ENCODE measurements at regions of chr19 and their contacts with region 1.

Region 1: GRCh38 chr19:18328340-18329034 is 5.6 kb upstream of the LSM4 start:
- DNase-seq: peak; percentile 87 to 94
- H3K4me3 ChIP-seq: peak overlapping the region; percentile 51
- H3K27ac ChIP-seq: peak overlapping the region; percentile 39
- H3K4me1 ChIP-seq: peaks cover 36% of the 10 kb centered on the region
- H3K27me3 ChIP-seq: no peaks in the 10 kb centered on the region
- CTCF ChIP-seq: peak; percentile 96

Region 2: DNA sequence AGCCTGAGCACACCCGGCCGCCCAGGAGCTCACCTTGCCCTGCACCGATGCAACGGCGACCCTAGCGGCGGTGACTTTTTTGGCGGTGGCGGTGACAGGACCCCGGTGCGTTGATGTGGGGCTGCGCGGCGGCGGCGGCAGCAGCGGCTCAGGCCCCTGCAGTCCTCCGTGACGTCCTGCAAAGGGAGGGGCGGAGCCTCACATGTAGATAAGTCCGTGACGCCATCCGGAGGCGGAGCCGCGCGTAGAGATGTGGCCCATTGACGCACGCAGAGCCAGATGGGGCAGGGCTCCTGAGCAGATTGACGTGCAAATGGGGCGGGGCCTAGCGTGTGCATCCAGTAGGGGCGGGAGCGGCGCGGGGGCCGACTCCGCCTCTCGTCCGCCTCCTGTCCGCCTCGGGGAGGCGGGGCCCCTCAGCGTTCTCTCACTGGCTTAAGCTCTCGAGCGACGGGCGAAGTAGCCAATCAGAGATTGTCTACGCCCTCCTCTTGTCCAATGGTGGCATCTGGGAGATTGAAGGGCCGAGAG is 124.6 kb before region 1 on chr19 and contains the start of gene RAB3A:
- CTCF ChIA-PET with region 1: interaction called, 5 read pairs
- POLR2A ChIA-PET with region 1: no interaction called
- intact Hi-C with region 1: loop called (anchors 1 kb)
- DNase-seq: peak; percentile 99 to 100
- H3K4me3 ChIP-seq: peak within 1 kb of the TSS; percentile 73
- H3K27ac ChIP-seq: peak within 1 kb of the TSS; percentile 46
- H3K4me1 ChIP-seq: peaks cover 13% of the 10 kb centered on the region
- H3K27me3 ChIP-seq: no peaks in the 10 kb centered on the region
- CTCF ChIP-seq: no peak
- total RNA-seq, gene RAB3A: 4.0 and 4.1 TPM in 2 replicates

Region 3: GRCh38 chr19:18274781-18275356 is 53.6 kb before region 1 on chr19:
- CTCF ChIA-PET with region 1: interaction called, 46 read pairs
- POLR2A ChIA-PET with region 1: interaction called, 85 read pairs
- intact Hi-C with region 1: loop called (anchors 1 kb)
- DNase-seq: peak; percentile 76 to 77
- H3K4me3 ChIP-seq: no peak overlapping the region
- H3K27ac ChIP-seq: peak overlapping the region; percentile 46
- H3K4me1 ChIP-seq: peaks cover 40% of the 10 kb centered on the region
- H3K27me3 ChIP-seq: no peaks in the 10 kb centered on the region
- CTCF ChIP-seq: no peak

Region 4: GRCh38 chr19:18291590-18292461 is 36.7 kb before region 1 on chr19:
- CTCF ChIA-PET with region 1: interaction called, 12 read pairs
- POLR2A ChIA-PET with region 1: no interaction called
- intact Hi-C with region 1: no loop called
- DNase-seq: peak; percentile 52 to 69
- H3K4me3 ChIP-seq: peak overlapping the region; percentile 62
- H3K27ac ChIP-seq: peak overlapping the region; percentile 58
- H3K4me1 ChIP-seq: peaks cover 13% of the 10 kb centered on the region
- H3K27me3 ChIP-seq: no peaks in the 10 kb centered on the region
- CTCF ChIP-seq: no peak

Region 5: GRCh38 chr19:19203012-19203856 is 874.7 kb after region 1 on chr19 and contains the start of gene NR2C2AP:
- CTCF ChIA-PET with region 1: no interaction called
- POLR2A ChIA-PET with region 1: interaction called, 10 read pairs
- intact Hi-C with region 1: no loop called
- DNase-seq: peak; percentile 80 to 90
- H3K4me3 ChIP-seq: peak within 1 kb of the TSS; percentile 91
- H3K27ac ChIP-seq: peak within 1 kb of the TSS; percentile 68
- H3K4me1 ChIP-seq: peaks cover 14% of the 10 kb centered on the region
- H3K27me3 ChIP-seq: peaks cover 16% of the 10 kb centered on the region; the same call in 1 of the 2 replicates
- CTCF ChIP-seq: no peak
- total RNA-seq, gene NR2C2AP: 25.7 and 28.7 TPM in 2 replicates

Measured in PC-9 (cell line).